ENCODE measurements at regions of chr6 and their contacts with region 1.

Region 1: DNA sequence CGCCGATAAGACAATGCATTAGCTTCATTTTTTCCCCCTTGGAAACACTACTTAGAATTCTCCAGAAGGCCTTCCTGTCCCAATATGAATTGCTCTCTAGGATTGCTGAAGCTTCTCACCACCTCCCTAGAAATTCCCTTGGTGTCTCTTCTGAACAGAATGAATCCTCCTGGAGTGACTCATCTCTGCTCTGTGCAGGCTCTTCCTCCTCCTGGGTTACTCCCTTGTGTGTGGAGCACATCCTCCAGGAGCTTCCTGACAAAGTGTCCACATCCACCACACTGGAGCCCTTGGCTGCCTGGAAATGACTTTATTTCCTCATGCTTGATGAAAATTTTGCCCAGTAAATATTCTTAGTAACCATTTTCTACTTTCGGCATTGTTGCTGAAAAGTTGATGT is 54.4 kb downstream of the DTNBP1 start:
- DNase-seq: peak; percentile 80
- H3K4me3 Mint-ChIP-seq: no peak overlapping the region
- H3K27ac Mint-ChIP-seq: peak overlapping the region; percentile 74
- H3K4me1 Mint-ChIP-seq: peaks cover 14% of the 10 kb centered on the region
- H3K27me3 Mint-ChIP-seq: no peaks in the 10 kb centered on the region
- CTCF ChIP-seq: no peak

Region 2: DNA sequence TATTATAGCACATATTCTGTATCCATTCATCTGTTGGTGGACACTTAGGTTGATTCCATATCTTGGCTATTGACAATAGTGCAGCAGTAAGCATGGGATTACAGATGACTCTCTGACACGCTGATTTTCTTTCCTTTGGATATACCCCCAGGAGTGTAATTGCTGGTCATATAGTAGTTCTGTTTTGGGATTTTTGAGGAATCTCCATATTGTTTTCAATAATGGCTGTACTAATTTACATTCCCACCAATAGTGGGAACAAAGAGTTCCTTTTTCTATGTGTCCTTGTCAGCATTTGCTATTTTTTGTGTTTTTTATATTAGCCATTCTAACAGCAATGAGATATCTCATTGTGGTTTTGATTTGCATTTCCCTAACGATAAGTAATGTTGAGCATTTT is 671.5 kb before region 1 on chr6:
- CTCF ChIA-PET with region 1: no interaction called
- POLR2A ChIA-PET with region 1: no interaction called
- intact Hi-C with region 1: loop called (anchors 5 kb)
- DNase-seq: no peak
- H3K4me3 Mint-ChIP-seq: no peak overlapping the region
- H3K27ac Mint-ChIP-seq: no peak overlapping the region
- H3K4me1 Mint-ChIP-seq: no peaks in the 10 kb centered on the region
- H3K27me3 Mint-ChIP-seq: no peaks in the 10 kb centered on the region
- CTCF ChIP-seq: no peak

Region 3: GRCh38 chr6:15744818-15745402 is 136.5 kb after region 1 on chr6:
- CTCF ChIA-PET with region 1: no interaction called
- POLR2A ChIA-PET with region 1: no interaction called
- intact Hi-C with region 1: no loop called
- DNase-seq: no peak
- H3K4me3 Mint-ChIP-seq: no peak overlapping the region
- H3K27ac Mint-ChIP-seq: no peak overlapping the region
- H3K4me1 Mint-ChIP-seq: no peaks in the 10 kb centered on the region
- H3K27me3 Mint-ChIP-seq: no peaks in the 10 kb centered on the region
- CTCF ChIP-seq: no peak